ENCODE measurements at regions of chr1 and their contacts with region 1.

Region 1: DNA sequence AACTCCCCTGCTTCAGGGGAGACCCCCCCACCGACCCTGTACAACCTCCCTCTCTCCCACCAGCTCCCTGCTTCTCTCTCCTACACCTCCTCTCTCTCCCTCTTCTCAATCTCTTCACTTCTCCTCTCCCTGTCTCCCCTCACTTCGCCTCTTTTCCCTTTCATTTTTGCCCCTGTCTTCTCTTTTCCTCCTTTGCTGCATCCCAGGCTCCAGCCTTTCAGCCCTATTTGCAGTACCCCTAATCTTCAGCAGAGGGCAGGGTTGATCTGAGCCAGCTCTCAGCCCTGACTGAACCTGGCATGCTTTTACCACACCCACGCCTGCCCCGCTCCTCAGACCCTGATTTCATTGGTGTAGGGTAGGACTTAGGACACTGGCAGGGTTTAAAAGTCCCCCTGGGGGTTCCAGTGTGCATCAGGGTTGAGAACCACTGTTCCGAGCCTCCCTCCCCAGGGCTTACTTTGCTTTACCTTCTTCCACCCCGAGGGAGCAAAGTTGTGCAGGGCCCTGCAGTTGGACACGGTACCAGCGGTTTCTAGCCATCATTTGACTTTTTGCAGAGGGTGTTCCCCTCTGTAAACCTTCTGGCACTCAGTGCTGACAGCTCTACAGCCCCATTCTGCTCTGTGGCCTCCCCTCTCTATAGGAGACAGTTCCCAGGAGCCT is 67.3 kb upstream of the CNTN2 start:
- DNase-seq: no peak
- ATAC-seq: peak; percentile 69 to 86
- H3K4me3 ChIP-seq: no peak overlapping the region
- H3K27ac ChIP-seq: no peak overlapping the region
- H3K4me1 ChIP-seq: no peaks in the 10 kb centered on the region
- H3K27me3 ChIP-seq: no peaks in the 10 kb centered on the region
- CTCF ChIP-seq: peak; percentile 60 to 84 (median 72)
- POLR2A ChIP-seq: no peak

Region 2: DNA sequence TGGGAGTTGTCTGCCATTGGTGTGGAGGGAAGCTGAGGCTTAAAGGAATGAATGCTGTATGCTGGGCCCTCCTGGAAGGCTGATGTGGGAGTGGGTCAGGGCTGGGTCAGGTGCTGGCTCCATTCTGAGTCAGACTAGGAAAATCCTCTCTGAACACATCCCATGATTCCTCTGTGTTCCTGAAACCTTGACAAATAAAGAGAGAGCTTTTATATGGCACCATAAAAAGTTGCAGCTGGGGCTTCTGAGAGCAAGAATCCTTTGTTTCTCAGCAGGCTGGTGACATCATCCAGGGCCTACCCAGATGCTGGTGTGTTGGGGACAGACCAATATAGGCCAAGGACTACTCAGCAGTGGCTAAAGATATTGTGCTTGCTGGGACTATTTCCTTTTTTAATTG is 132.8 kb before region 1 on chr1:
- in situ Hi-C with region 1: no loop called
- intact Hi-C with region 1: no loop called
- DNase-seq: no peak
- ATAC-seq: no peak
- H3K4me3 ChIP-seq: no peak overlapping the region
- H3K27ac ChIP-seq: no peak overlapping the region
- H3K4me1 ChIP-seq: no peaks in the 10 kb centered on the region
- H3K27me3 ChIP-seq: no peaks in the 10 kb centered on the region
- CTCF ChIP-seq: no peak
- POLR2A ChIP-seq: no peak

Region 3: GRCh38 chr1:205061665-205062069 is 86.0 kb after region 1 on chr1:
- in situ Hi-C with region 1: loop called in 3 of 4 experiments (anchors 5 to 10 kb)
- intact Hi-C with region 1: loop called (anchors 5 kb)
- DNase-seq: peak; percentile 13 to 55
- ATAC-seq: peak; percentile 17 to 68
- H3K4me3 ChIP-seq: no peak overlapping the region
- H3K27ac ChIP-seq: no peak overlapping the region
- H3K4me1 ChIP-seq: no peaks in the 10 kb centered on the region
- H3K27me3 ChIP-seq: no peaks in the 10 kb centered on the region
- CTCF ChIP-seq: peak; percentile 53 to 79 (median 74)
- POLR2A ChIP-seq: no peak

Region 4: GRCh38 chr1:205091043-205091740 is 115.5 kb after region 1 on chr1:
- in situ Hi-C with region 1: no loop called
- intact Hi-C with region 1: no loop called
- DNase-seq: peak; percentile 70 to 86
- ATAC-seq: peak; percentile 100
- H3K4me3 ChIP-seq: peak overlapping the region in 1 of 4 donors; percentile 15
- H3K27ac ChIP-seq: peak overlapping the region; percentile 88 to 93 (median 88)
- H3K4me1 ChIP-seq: peaks cover 13 to 18% of the 10 kb centered on the region in 2 donors
- H3K27me3 ChIP-seq: no peaks in the 10 kb centered on the region
- CTCF ChIP-seq: no peak
- POLR2A ChIP-seq: peak in 1 of 2 donors; percentile 14

Region 5: DNA sequence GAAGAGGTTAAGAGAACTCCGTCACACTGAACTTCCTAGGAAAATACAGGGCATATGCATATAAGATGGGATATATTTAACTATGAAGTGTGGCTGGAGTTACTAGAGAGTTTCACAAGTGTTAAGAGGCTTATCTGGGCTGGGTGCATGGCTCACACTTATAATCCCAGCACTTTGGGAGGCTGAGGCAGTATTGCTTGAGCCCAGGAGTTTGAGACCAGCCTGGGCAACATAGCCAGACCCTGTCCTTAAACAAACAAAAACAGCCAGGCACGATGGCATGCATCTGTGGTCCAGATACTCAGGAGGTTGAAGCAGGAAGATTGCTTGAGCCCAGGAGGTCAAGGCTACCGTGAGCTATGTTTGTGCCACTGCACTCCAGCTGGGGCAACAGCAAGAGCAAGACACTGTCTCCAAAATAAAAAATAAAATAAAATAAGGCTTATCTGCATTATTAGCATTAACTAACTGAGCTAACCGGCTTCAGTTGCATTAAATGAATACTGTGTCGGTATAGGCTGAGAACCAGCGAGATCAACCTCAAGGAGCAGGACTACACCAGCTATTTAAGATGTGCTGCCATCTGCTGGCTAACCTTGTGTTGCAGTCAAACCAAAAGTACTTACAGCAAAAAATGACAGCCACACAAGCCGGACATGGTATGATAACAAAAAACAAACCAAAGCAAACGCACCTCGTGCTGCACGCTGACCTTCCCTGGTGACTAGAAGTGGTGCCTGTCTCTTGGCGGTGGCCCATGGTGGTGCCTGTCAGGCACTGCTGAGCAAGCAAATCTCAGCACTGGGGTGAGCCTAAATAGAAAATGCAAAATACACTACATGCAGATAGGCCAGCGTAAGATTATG is 165.8 kb after region 1 on chr1:
- in situ Hi-C with region 1: loop called in 3 of 4 experiments (anchors 10 kb)
- intact Hi-C with region 1: no loop called
- DNase-seq: peak; percentile 26 to 62
- ATAC-seq: peak; percentile 81 to 93
- H3K4me3 ChIP-seq: peak overlapping the region in 2 of 4 donors; percentile 31 to 46
- H3K27ac ChIP-seq: peak overlapping the region in 2 of 4 donors; percentile 37 to 48
- H3K4me1 ChIP-seq: peaks cover 7 to 8% of the 10 kb centered on the region in 2 donors
- H3K27me3 ChIP-seq: no peaks in the 10 kb centered on the region
- CTCF ChIP-seq: peak; percentile 71 to 84 (median 78)
- POLR2A ChIP-seq: no peak

Region 6: GRCh38 chr1:205255941-205256780 is 280.5 kb after region 1 on chr1:
- in situ Hi-C with region 1: loop called (anchors 5 to 25 kb)
- intact Hi-C with region 1: no loop called
- DNase-seq: peak; percentile 84 to 93
- ATAC-seq: peak; percentile 71 to 72
- H3K4me3 ChIP-seq: no peak overlapping the region
- H3K27ac ChIP-seq: peak overlapping the region; percentile 49 to 82 (median 74)
- H3K4me1 ChIP-seq: peaks cover 54 to 67% of the 10 kb centered on the region in 2 donors
- H3K27me3 ChIP-seq: no peaks in the 10 kb centered on the region
- CTCF ChIP-seq: peak; percentile 91 to 99 (median 99)
- POLR2A ChIP-seq: no peak